CD4-positive, alpha-beta memory T cell (primary cell): ENCODE measurements at regions of chr3 and their contacts with region 1.

Region 1: GRCh38 chr3:150763122-150763841 is at the start of gene SIAH2:
- DNase-seq: peak; percentile 94 to 98 (median 95)
- H3K4me3 ChIP-seq: peak within 1 kb of the TSS; percentile 80 to 97
- H3K4me3 Mint-ChIP-seq: peak within 1 kb of the TSS; percentile 97 to 100 (median 98)
- H3K27ac ChIP-seq: peak within 1 kb of the TSS; percentile 98
- H3K27ac Mint-ChIP-seq: peak within 1 kb of the TSS; percentile 98 to 100 (median 100)
- H3K4me1 ChIP-seq: peaks cover 47% of the 10 kb centered on the region
- H3K4me1 Mint-ChIP-seq: peaks cover 26 to 60% (median 47%) of the 10 kb centered on the region in 4 donors
- H3K27me3 ChIP-seq: no peaks in the 10 kb centered on the region
- H3K27me3 Mint-ChIP-seq: no peaks in the 10 kb centered on the region
- total RNA-seq, gene SIAH2: 28.3 to 29.5 TPM

Region 2: GRCh38 chr3:150603153-150603979 is 159.9 kb before region 1 on chr3 and contains the start of gene SELENOT:
- CTCF ChIA-PET with region 1: interaction called, 8 read pairs
- POLR2A ChIA-PET with region 1: interaction called, 77 read pairs
- intact Hi-C with region 1: loop called (anchors 1 kb)
- DNase-seq: peak; percentile 92 to 98 (median 96)
- H3K4me3 ChIP-seq: peak within 1 kb of the TSS; percentile 71 to 91
- H3K4me3 Mint-ChIP-seq: peak within 1 kb of the TSS; percentile 92 to 98 (median 96)
- H3K27ac ChIP-seq: peak within 1 kb of the TSS; percentile 97
- H3K27ac Mint-ChIP-seq: peak within 1 kb of the TSS; percentile 97 to 99 (median 98)
- H3K4me1 ChIP-seq: peaks cover 53% of the 10 kb centered on the region
- H3K4me1 Mint-ChIP-seq: peaks cover 37 to 78% (median 61%) of the 10 kb centered on the region in 4 donors
- H3K27me3 ChIP-seq: no peaks in the 10 kb centered on the region
- H3K27me3 Mint-ChIP-seq: no peaks in the 10 kb centered on the region
- total RNA-seq, gene SELENOT: 71.8 to 87.1 TPM

Region 3: GRCh38 chr3:150721285-150722130 is 41.8 kb before region 1 on chr3:
- CTCF ChIA-PET with region 1: interaction called, 27 read pairs
- POLR2A ChIA-PET with region 1: interaction called, 25 read pairs
- intact Hi-C with region 1: loop called (anchors 1 kb)
- DNase-seq: peak in 4 of 5 donors; percentile 67 to 75 (median 68)
- H3K4me3 ChIP-seq: no peak overlapping the region
- H3K4me3 Mint-ChIP-seq: peak overlapping the region in 1 of 8 donors; percentile 48
- H3K27ac ChIP-seq: no peak overlapping the region
- H3K27ac Mint-ChIP-seq: peak overlapping the region in 2 of 7 donors; percentile 11 to 53
- H3K4me1 ChIP-seq: peaks cover 12% of the 10 kb centered on the region
- H3K4me1 Mint-ChIP-seq: peaks cover 6 to 11% (median 8%) of the 10 kb centered on the region in 4 donors
- H3K27me3 ChIP-seq: no peaks in the 10 kb centered on the region
- H3K27me3 Mint-ChIP-seq: no peaks in the 10 kb centered on the region

Region 4: GRCh38 chr3:150775091-150775501 is 11.8 kb after region 1 on chr3:
- CTCF ChIA-PET with region 1: interaction called, 12 read pairs
- POLR2A ChIA-PET with region 1: interaction called, 14 read pairs
- intact Hi-C with region 1: no loop called
- DNase-seq: no peak
- H3K4me3 ChIP-seq: no peak overlapping the region
- H3K4me3 Mint-ChIP-seq: no peak overlapping the region
- H3K27ac ChIP-seq: no peak overlapping the region
- H3K27ac Mint-ChIP-seq: no peak overlapping the region
- H3K4me1 ChIP-seq: no peaks in the 10 kb centered on the region
- H3K4me1 Mint-ChIP-seq: no peaks in the 10 kb centered on the region
- H3K27me3 ChIP-seq: no peaks in the 10 kb centered on the region
- H3K27me3 Mint-ChIP-seq: no peaks in the 10 kb centered on the region

Region 5: DNA sequence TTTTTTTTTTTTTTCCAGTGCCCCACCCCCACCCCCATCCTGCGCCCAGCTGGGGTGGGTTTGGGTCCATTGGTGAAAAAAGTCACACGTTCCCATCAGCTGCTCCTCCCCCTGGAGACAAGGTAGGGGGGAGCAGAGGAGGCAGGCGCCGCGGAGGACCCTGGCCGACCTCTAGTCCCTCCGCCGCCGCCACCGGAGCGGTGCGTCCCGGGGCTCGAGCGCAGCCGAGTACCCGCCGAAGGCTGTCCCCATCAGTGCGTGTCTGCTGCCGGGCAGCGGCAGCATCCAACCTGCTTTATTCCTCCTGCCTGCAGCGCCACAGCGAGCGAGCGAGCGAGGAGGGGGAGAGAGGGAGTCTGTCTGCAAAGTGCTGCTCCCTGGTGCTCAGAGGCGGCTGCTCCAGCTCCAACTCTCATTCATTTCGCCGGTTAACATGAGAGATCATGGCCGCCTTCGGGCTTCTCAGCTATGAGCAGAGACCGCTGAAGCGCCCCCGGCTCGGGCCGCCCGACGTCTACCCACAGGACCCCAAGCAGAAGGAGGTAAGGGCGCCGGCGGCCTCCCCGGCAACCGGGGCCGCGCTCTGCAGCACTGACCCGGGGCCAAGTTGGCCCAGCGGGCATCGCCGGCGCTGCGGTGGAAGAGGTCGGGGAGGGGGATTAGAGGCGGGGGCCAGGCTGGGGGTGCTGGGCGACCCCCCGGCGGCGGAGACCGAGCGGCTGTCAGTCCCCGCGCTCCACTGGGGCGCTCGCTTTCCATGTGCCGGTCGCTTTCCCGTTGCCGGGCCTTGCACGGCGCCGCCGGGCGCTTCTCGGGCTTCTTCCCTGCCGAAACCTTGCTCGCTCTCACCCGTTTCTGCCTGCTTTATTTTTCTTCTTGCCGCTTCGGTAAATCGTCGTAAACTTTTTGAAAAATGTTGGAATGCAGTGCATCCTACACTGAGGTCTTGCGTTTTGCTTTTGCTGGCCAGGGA is 323.5 kb after region 1 on chr3:
- CTCF ChIA-PET with region 1: no interaction called
- POLR2A ChIA-PET with region 1: no interaction called
- intact Hi-C with region 1: loop called (anchors 1 kb)
- DNase-seq: peak; percentile 51 to 78 (median 61)
- H3K4me3 ChIP-seq: peak overlapping the region in 1 of 2 donors; percentile 41
- H3K4me3 Mint-ChIP-seq: peak overlapping the region; percentile 86 to 91 (median 89)
- H3K27ac ChIP-seq: no peak overlapping the region
- H3K27ac Mint-ChIP-seq: peak overlapping the region in 2 of 7 donors; percentile 78 to 79
- H3K4me1 ChIP-seq: peaks cover 6% of the 10 kb centered on the region
- H3K4me1 Mint-ChIP-seq: peaks cover 5 to 18% (median 12%) of the 10 kb centered on the region in 4 donors
- H3K27me3 ChIP-seq: peaks cover 17% of the 10 kb centered on the region
- H3K27me3 Mint-ChIP-seq: peaks cover 32% of the 10 kb centered on the region in 2 donors

Region 6: DNA sequence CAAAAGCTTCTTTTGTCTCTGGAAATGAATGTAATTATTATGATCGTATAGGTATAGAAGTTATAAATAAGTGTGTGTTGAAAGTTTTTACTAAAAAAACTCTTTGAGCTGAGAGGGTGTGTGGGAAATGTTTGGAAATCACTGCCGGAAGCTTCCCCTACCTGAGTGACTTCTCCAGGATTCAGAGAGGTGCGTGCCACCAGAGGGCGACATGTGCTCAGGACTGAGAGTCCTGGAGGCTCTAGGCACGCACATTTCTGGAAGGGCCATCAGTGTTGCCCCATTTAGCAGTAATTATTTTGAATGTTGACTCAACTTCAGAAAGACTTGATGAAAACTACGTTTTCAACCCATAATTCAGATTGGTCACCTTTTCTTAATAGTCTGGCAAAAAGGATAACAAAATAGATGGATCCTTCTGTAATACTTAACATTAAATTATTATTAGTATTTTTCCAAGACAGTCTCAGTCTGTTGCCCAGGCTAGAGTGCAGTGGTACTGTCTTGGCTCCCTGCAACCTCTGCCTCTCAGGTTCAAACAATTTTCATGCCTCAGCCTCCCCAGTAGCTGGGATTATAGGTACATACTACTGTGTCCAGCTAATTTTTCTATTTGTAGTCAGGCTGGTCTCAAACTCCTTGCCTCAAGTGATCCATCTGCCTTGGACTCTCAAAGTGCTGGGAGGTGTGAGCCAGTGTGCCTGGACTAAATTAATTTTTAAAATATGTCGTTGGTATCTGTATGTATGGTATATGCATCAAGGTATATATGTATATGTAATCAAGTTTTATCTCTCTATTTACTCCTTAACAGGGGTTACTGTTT is 405.2 kb after region 1 on chr3:
- CTCF ChIA-PET with region 1: no interaction called
- POLR2A ChIA-PET with region 1: no interaction called
- intact Hi-C with region 1: no loop called
- DNase-seq: peak; percentile 69 to 75 (median 72)
- H3K4me3 ChIP-seq: no peak overlapping the region
- H3K4me3 Mint-ChIP-seq: no peak overlapping the region
- H3K27ac ChIP-seq: no peak overlapping the region
- H3K27ac Mint-ChIP-seq: peak overlapping the region in 3 of 7 donors; percentile 2 to 76 (median 43)
- H3K4me1 ChIP-seq: peaks cover 34% of the 10 kb centered on the region
- H3K4me1 Mint-ChIP-seq: peaks cover 26 to 39% (median 33%) of the 10 kb centered on the region in 4 donors
- H3K27me3 ChIP-seq: no peaks in the 10 kb centered on the region
- H3K27me3 Mint-ChIP-seq: no peaks in the 10 kb centered on the region

Region 7: DNA sequence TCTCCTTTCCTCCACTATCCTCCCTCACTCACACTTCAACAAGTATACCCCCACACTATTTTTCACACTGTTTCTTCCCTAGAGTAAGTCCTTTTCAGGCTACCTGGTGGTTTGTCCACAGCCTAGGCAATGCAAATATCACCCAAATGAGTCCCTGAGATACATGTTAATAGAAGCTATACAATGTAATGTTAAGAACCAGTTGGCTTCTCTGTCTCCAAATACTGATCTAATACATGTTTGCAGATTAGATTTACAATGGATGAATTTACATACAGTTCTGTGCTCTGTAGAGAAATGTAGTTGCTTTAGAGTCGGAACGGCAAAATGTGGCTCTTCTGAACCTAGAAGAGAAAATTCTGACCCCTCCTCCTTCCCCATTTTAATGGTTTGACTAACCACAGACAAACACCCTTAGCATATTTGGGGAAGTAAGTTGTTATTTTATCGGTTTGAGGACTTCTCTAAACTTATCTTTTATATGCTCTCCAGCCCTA is 1441.9 kb after region 1 on chr3:
- CTCF ChIA-PET with region 1: no interaction called
- POLR2A ChIA-PET with region 1: no interaction called
- intact Hi-C with region 1: loop called (anchors 5 kb)
- DNase-seq: peak in 3 of 5 donors; percentile 41 to 53 (median 47)
- H3K4me3 ChIP-seq: peak overlapping the region; percentile 41 to 63
- H3K4me3 Mint-ChIP-seq: peak overlapping the region; percentile 91 to 100 (median 98)
- H3K27ac ChIP-seq: peak overlapping the region; percentile 75
- H3K27ac Mint-ChIP-seq: peak overlapping the region; percentile 91 to 98 (median 96)
- H3K4me1 ChIP-seq: peaks cover 77% of the 10 kb centered on the region
- H3K4me1 Mint-ChIP-seq: peaks cover 41 to 79% (median 56%) of the 10 kb centered on the region in 4 donors
- H3K27me3 ChIP-seq: no peaks in the 10 kb centered on the region
- H3K27me3 Mint-ChIP-seq: no peaks in the 10 kb centered on the region